SK-N-SH (cell line): ENCODE measurements at regions of chr3 and their contacts with region 1.

Region 1: DNA sequence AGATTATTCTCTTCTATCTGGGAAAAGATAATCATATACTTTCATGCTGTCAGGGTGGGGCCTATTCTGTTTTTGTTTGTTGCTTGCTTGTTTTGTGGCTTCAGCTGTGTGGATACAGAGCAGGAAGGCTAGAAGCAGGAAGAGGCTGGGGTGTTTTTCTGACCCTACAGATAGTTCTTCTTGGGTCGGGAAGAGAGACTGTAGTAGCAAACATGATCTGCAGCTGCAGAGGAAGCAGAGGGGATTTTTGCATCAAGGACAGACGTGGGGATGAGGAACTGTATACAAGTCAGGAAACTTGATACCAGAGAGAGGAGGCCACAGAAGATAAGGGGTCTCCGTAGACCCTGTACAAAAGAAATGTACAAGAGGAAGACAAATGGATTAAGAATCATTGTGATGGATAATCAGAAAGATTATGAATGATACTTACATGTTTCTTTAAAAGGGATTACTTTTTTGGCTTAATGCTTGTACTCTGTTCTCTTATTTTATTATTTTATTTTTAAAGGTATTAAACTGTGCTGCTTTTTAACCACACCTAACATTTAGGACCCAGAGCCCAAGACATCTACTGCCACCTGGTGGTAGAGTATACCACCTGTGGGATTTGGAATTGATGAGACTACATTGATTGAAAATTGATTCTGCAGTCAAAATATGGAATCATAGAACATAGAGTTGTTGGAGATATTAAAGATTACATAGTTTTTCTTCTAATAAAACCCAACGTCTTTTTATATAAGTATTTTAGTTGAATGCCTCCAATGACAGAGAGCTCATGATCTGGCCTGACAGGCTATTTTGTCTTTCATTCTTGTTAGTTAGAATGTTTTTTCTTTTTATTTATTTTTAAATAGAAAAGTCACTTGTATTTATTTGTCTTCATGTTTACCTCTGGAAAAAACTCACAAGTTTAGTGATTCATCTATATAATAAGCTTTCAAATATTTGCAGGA is 87.3 kb upstream of the ROPN1 start:
- DNase-seq: peak; percentile 45
- H3K4me3 ChIP-seq: no peak overlapping the region
- H3K27ac ChIP-seq: peak overlapping the region in 1 of 2 experiments; percentile 34; a peak in 1 of 4 replicates
- H3K4me1 ChIP-seq: peaks cover 0 to 34% of the 10 kb centered on the region in 2 experiments; a peak in 3 of 4 replicates
- H3K27me3 ChIP-seq: no peaks in the 10 kb centered on the region
- CTCF ChIP-seq: peak; percentile 89
- EP300 ChIP-seq: no peak
- RAD21 ChIP-seq: peak; percentile 85

Region 2: DNA sequence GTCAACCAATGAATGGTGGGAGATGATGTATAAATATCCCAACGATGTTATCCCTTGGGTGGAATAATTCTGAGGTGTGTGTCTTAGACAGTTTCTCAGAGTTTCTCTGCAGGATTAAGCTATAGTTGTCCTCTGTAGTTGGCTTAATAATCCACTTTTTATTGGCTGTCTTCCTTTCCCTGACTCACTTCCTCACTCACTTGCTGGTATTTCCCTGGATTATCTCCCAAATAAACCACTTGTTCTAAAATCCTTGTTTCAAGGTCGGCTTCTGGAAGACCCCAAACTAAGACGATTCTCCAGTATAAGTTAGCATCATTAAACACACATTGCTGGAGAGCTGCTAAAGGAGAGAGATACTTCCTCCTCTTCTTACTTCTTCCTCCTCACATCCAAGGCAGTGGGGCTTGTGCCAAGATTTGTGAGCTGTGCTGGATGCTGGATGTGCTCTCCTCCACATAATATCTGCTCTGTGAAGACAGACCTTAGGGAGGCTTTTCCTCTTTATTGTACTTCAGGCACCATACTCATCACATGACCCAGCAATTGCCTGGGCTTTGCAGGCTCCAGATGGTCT is 64.8 kb before region 1 on chr3:
- CTCF ChIA-PET with region 1: interaction called, 97 read pairs
- POLR2A ChIA-PET with region 1: no interaction called
- DNase-seq: no peak
- H3K4me3 ChIP-seq: no peak overlapping the region
- H3K27ac ChIP-seq: no peak overlapping the region
- H3K4me1 ChIP-seq: peaks cover 0 to 5% of the 10 kb centered on the region in 2 experiments; a peak in 1 of 4 replicates
- H3K27me3 ChIP-seq: no peaks in the 10 kb centered on the region
- CTCF ChIP-seq: no peak
- EP300 ChIP-seq: no peak
- RAD21 ChIP-seq: no peak

Region 3: GRCh38 chr3:124063197-124063909 is 15.9 kb before region 1 on chr3:
- CTCF ChIA-PET with region 1: interaction called, 14 read pairs
- POLR2A ChIA-PET with region 1: no interaction called
- DNase-seq: peak; percentile 30
- H3K4me3 ChIP-seq: no peak overlapping the region
- H3K27ac ChIP-seq: peak overlapping the region in 1 of 2 experiments; percentile 96; a peak in 2 of 4 replicates
- H3K4me1 ChIP-seq: peaks cover 8 to 65% of the 10 kb centered on the region in 2 experiments; a peak in 3 of 4 replicates
- H3K27me3 ChIP-seq: no peaks in the 10 kb centered on the region
- CTCF ChIP-seq: no peak
- EP300 ChIP-seq: no peak
- RAD21 ChIP-seq: no peak

Region 4: GRCh38 chr3:124097362-124098131 is 18.3 kb after region 1 on chr3:
- CTCF ChIA-PET with region 1: interaction called, 28 read pairs
- POLR2A ChIA-PET with region 1: no interaction called
- DNase-seq: no peak
- H3K4me3 ChIP-seq: no peak overlapping the region
- H3K27ac ChIP-seq: 0 out of 4 replicates have a peak overlapping the region, but pooled peaks of 1 of the 2 experiments have one; percentile 2
- H3K4me1 ChIP-seq: peaks cover 3 to 5% of the 10 kb centered on the region in 2 experiments; a peak in 2 of 4 replicates
- H3K27me3 ChIP-seq: no peaks in the 10 kb centered on the region
- CTCF ChIP-seq: no peak
- EP300 ChIP-seq: no peak
- RAD21 ChIP-seq: no peak